HepG2 (cell line): ENCODE measurements at regions of chr2 and their contacts with region 1.

Region 1: GRCh38 chr2:178478439-178479274 is at the start of gene FKBP7:
- DNase-seq: peak; percentile 82
- ATAC-seq: peak; percentile 67
- H3K4me3 ChIP-seq: peak within 1 kb of the TSS; percentile 80 to 91 (median 82)
- H3K27ac ChIP-seq: peak within 1 kb of the TSS; percentile 89
- H3K4me1 ChIP-seq: peaks cover 46% of the 10 kb centered on the region
- H3K27me3 ChIP-seq: no peaks in the 10 kb centered on the region; a peak in 1 of 5 replicates
- CTCF ChIP-seq: peak; percentile 96
- EP300 ChIP-seq: 0 out of 4 replicates have a peak, but pooled peaks of 1 of the 2 experiments have one; percentile 18
- POLR2A ChIP-seq: peak; percentile 79 to 87
- RAD21 ChIP-seq: peak; percentile 43; the same call in 1 of the 2 replicates
- total RNA-seq, gene FKBP7: 9.7 and 14.8 TPM in 2 replicates

Region 2: GRCh38 chr2:178522950-178523595 is 44.4 kb after region 1 on chr2:
- CTCF ChIA-PET with region 1: no interaction called
- POLR2A ChIA-PET with region 1: no interaction called
- in situ Hi-C with region 1: no loop called
- intact Hi-C with region 1: loop called (anchors 2 kb)
- DNase-seq: peak; percentile 61
- ATAC-seq: peak; percentile 89
- H3K4me3 ChIP-seq: peak overlapping the region; percentile 52 to 72 (median 53)
- H3K27ac ChIP-seq: peak overlapping the region; percentile 5
- H3K4me1 ChIP-seq: no peaks in the 10 kb centered on the region
- H3K27me3 ChIP-seq: no peaks in the 10 kb centered on the region
- CTCF ChIP-seq: peak; percentile 87
- EP300 ChIP-seq: no peak
- POLR2A ChIP-seq: peak; percentile 27 to 79; a peak in 3 of 4 replicates
- RAD21 ChIP-seq: peak; percentile 44; the same call in 1 of the 2 replicates